ENCODE measurements at regions of chr10 and their contacts with region 1.

Region 1: GRCh38 chr10:110893559-110894179 is 21.9 kb downstream of the PDCD4 start:
- DNase-seq: no peak
- ATAC-seq: peak; percentile 77

Region 2: GRCh38 chr10:110426294-110427153 is 467.1 kb before region 1 on chr10:
- intact Hi-C with region 1: no loop called
- DNase-seq: peak; percentile 62
- ATAC-seq: peak in 1 of 2 donors; percentile 39

Region 3: GRCh38 chr10:110610308-110610774 is 283.3 kb before region 1 on chr10:
- intact Hi-C with region 1: loop called in 1 of 2 experiments (anchors 10 kb)
- DNase-seq: no peak
- ATAC-seq: peak; percentile 61 to 66

Region 4: DNA sequence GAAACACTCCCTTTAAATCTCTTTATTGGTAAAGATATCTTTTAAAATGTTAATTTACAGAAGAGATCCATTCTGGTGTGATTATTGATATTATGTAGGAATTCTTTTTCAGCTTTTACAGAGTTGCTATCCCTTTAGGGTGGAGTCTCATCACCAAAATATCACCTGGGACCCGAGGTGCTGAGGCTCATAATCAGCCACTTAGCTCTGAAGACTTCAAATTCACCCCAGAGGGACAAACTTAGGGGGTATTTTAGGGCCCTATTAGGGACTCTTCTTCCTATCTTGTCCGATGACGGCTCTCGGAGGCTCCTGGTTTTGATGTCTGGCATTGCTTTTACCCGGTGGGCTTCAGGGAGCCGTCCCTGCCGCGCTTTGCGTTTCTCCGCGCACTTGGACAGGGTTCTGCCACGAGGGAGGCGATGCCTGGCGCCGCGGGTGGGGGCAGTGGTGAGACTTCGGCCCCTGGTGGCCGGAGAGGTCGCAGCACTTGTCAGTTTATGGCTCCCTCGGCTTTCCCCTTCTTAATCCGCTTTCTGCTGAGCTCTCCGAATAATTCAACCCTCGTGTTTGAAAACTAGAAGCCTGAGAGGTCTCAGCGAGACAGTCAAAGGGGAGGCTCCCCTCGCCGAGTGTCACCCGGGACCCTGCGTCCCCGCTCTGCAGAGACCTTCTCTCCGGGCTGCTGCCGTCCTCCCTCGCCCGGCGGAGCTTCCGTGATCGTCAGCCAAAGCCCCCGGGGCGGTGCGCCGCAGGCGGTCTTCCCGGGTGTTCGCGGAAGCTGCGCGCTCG is 221.7 kb before region 1 on chr10:
- intact Hi-C with region 1: no loop called
- DNase-seq: peak; percentile 82
- ATAC-seq: peak; percentile 88 to 92

Region 5: DNA sequence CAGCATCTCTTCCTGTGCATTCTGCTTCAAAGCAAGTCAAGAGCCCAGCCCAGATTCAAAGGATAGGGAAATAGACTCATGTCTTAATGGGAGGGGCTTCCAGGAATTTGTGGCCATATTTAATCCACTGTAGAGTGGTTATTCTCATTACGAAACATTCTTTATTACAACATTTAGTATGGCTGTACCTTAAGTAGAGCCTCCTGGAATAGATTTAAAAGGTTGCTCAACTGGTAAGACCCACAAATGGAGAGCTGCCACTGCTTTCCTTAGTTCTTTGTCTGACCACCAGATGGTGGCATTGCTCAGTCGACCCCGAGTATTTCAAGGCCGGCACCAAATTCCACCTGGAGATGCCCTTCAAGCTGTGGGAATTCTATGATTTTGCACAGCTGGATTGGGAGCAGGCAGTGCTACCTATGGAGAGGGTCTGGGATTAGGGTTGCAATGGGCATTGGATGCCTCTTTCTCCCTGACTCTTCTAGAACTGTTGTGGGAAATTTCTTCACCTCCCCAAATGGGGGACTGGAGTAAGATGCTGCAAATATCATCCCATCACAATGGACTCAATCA is 147.3 kb before region 1 on chr10:
- intact Hi-C with region 1: loop called (anchors 5 to 10 kb)
- DNase-seq: peak; percentile 47
- ATAC-seq: peak; percentile 66 to 69

Region 6: DNA sequence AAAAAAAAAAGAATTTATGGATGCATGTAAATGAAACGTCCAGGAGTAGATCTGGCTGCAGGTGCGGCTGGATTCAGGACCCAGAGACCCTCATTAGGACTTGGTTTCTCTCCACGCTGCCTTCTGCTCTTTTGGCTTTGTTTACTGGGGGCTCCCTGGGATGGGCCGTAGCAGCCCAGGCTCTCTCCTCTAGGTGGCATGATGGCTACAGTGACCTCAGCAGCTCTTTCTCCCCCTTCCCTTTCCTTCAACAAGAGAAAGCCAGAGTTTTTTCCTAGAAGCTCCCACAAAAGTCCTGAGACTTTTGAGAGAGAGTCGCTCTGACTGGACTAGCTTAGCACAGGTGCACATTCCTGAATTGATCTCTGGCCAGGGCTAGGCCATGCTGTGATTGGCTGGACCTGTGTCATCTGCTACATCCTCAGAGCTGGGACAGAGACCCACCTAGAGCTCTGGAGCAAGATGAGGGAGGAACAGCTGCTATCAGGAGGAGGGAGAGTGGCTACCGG is 89.8 kb before region 1 on chr10:
- intact Hi-C with region 1: loop called in 1 of 2 experiments (anchors 5 kb)
- DNase-seq: peak; percentile 58
- ATAC-seq: peak; percentile 73 to 78

Region 7: DNA sequence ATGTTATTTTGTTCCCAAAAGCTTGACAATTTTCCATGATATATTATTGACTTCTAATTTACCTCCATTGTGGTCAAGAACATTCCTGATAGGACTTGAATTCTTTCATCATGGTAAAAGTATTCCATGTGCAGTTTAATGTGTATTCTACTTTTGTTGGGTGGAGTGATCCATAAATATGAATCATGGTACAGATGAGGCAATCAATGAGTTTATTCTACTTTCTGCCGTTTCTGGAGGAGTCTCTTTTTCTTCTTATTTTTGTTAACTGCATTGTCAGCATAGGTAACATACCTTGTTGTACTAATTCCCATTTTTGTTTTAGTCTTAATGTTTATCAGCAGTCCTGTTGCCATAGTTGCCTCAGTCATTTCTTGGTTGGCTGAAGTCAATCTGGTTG is 95.3 kb after region 1 on chr10:
- intact Hi-C with region 1: no loop called
- DNase-seq: no peak
- ATAC-seq: no peak